Prostate gland (tissue), 2 donors: ENCODE measurements at regions of chr3 and their contacts with region 1.

Region 1: GRCh38 chr3:52934630-52935530 is 37.5 kb upstream of the STIMATE start:
- DNase-seq: peak; percentile 39
- H3K4me3 ChIP-seq: no peak overlapping the region
- H3K27ac ChIP-seq: no peak overlapping the region
- H3K4me1 ChIP-seq: no peaks in the 10 kb centered on the region
- H3K27me3 ChIP-seq: no peaks in the 10 kb centered on the region
- CTCF ChIP-seq: peak; percentile 29 to 68 (median 44)
- POLR2A ChIP-seq: no peak

Region 2: DNA sequence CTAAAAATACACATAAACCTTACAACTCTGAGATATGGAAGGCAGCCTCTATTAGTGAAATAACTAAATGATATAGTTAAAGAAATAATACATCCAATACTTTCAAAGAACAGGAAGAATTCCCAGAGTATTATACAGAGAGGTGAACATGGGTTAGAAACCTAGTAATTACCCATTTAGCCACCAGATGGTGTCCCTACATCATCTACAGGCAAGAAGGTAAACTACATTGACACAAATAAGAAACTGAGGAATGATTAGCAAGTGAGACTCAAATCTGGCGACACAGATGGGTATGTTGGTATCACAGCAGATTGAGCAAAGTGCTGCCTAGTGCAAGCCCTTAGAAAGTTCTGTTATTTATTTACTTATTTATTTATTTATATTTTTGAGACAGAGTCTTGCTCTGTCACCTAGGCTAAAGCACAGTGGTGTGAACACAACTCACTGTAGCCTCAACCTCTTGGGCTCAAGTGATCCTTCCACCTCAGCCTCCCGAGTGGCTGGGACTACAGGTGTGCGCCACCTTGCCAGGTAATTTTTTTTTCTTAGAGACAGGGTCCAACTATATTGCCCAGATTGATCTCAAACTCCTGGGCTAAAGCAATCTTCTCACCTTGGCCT is 192.3 kb before region 1 on chr3:
- intact Hi-C with region 1: loop called (anchors 10 kb)
- DNase-seq: no peak
- H3K4me3 ChIP-seq: no peak overlapping the region
- H3K27ac ChIP-seq: no peak overlapping the region
- H3K4me1 ChIP-seq: no peaks in the 10 kb centered on the region
- H3K27me3 ChIP-seq: no peaks in the 10 kb centered on the region
- CTCF ChIP-seq: peak in 3 of 4 experiments; percentile 38 to 60 (median 52)
- POLR2A ChIP-seq: no peak

Region 3: DNA sequence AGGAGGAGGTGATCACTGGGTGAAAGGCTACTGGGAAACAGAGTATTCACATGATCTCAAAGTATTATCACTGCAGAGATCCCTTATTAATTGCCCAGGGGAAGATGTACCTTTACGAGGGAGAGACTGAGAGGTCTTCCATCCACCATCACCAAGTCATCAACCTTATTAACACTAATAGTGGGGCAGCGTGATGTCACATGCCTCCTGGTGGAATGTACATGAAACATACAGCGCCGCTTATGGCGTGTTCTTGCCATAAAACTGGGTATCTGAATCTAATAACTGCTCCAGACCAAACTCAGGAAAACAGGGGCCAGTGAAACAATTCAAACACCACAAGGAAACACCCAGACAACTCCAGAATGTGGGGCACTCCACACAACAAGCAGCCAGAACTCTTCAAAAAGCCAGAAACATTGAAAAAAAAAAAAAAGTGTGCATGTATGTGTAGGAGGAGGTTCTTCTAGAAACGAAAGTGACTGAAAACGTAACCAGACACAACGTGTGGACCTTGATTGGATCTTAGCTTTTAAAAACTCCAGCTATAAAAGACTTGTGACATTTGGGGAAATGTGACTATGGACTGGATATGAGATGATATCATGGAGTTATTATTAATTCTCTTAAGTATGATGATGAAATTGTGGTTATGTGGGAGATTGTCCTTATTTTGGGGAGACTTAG is 42.1 kb before region 1 on chr3:
- intact Hi-C with region 1: no loop called
- DNase-seq: no peak
- H3K4me3 ChIP-seq: no peak overlapping the region
- H3K27ac ChIP-seq: peak overlapping the region; percentile 31 to 40
- H3K4me1 ChIP-seq: peaks cover 8% of the 10 kb centered on the region
- H3K27me3 ChIP-seq: no peaks in the 10 kb centered on the region
- CTCF ChIP-seq: peak in 1 of 4 experiments; percentile 2
- POLR2A ChIP-seq: no peak